PC-9 (cell line): ENCODE measurements at regions of chr3 and their contacts with region 1.

Region 1: DNA sequence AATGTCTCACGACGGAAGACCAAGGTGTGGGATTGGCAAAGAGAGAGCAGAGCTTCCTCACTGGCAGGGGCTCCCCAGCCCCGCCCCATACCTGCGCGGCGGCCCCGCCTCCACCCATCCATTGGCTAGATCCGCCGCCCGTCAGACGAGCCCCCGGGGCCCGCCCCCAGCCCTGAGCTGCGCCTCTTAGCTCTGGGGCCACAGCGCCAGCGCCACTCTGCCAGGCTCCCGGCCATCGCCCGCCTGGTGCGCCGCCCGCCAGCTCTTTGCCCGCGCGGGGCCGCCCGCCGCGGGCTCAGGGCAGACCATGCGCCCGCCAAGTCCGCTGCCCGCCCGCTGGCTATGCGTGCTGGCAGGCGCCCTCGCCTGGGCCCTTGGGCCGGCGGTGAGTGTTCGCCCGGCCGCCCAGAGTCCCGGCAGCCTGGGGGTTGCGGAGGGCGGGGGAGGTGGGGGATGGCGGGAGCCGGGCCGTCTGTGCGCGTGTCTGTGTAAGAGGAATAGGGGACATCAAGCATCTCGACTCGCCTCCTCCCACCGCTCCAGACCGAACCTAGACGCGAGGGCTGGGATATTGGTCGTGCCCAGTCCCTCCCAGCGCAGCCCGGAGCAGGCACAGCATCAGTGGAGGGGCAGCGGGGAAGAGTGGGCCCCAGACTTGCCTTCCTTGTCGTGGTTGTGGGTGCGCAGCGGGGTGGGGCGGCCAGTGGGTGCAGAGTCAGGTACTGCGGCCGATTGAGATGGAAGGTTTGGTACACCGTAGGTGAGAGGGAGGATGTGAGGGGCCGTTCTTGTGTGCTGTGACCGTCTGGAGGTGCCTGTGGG is at the start of gene VIPR1:
- DNase-seq: peak; percentile 77 to 96
- H3K4me3 ChIP-seq: peak within 1 kb of the TSS; percentile 64
- H3K27ac ChIP-seq: no peak within 1 kb of the TSS
- H3K4me1 ChIP-seq: peaks cover 38% of the 10 kb centered on the region
- H3K27me3 ChIP-seq: no peaks in the 10 kb centered on the region
- CTCF ChIP-seq: no peak
- total RNA-seq, gene VIPR1: 19.7 and 23.9 TPM in 2 replicates

Region 2: GRCh38 chr3:42314411-42314810 is 188.2 kb before region 1 on chr3:
- CTCF ChIA-PET with region 1: no interaction called
- POLR2A ChIA-PET with region 1: no interaction called
- intact Hi-C with region 1: no loop called
- DNase-seq: no peak
- H3K4me3 ChIP-seq: no peak overlapping the region
- H3K27ac ChIP-seq: no peak overlapping the region
- H3K4me1 ChIP-seq: no peaks in the 10 kb centered on the region
- H3K27me3 ChIP-seq: no peaks in the 10 kb centered on the region
- CTCF ChIP-seq: no peak

Region 3: GRCh38 chr3:42443819-42444436 is 58.7 kb before region 1 on chr3:
- CTCF ChIA-PET with region 1: no interaction called
- POLR2A ChIA-PET with region 1: no interaction called
- intact Hi-C with region 1: loop called (anchors 2 kb)
- DNase-seq: peak; percentile 59 to 83
- H3K4me3 ChIP-seq: no peak overlapping the region
- H3K27ac ChIP-seq: no peak overlapping the region
- H3K4me1 ChIP-seq: no peaks in the 10 kb centered on the region
- H3K27me3 ChIP-seq: no peaks in the 10 kb centered on the region
- CTCF ChIP-seq: peak; percentile 94

Region 4: DNA sequence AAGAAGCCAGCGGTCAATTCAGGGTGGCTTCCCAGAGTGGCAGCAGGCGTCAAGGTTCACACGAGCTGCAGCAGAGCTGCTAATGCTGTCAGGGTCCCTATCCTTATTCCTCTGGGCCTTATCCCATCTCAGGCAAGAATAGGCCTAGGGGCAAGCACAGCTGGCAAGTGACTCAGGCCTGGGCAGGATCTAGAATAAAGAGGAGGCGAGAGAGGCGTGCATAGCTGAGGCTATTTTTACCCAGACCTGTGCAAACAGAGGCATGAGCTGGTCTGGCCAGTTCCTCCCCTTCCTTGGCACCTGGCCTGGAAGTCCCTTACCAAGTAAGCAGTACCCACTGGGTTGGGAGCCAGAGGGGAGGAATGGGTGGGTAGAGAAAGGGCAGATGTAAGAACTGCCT is 12.4 kb before region 1 on chr3:
- CTCF ChIA-PET with region 1: interaction called, 6 read pairs
- POLR2A ChIA-PET with region 1: no interaction called
- intact Hi-C with region 1: loop called (anchors 1 kb)
- DNase-seq: peak; percentile 90 to 97
- H3K4me3 ChIP-seq: no peak overlapping the region
- H3K27ac ChIP-seq: peak overlapping the region; percentile 89
- H3K4me1 ChIP-seq: peaks cover 49% of the 10 kb centered on the region
- H3K27me3 ChIP-seq: no peaks in the 10 kb centered on the region
- CTCF ChIP-seq: no peak

Region 5: DNA sequence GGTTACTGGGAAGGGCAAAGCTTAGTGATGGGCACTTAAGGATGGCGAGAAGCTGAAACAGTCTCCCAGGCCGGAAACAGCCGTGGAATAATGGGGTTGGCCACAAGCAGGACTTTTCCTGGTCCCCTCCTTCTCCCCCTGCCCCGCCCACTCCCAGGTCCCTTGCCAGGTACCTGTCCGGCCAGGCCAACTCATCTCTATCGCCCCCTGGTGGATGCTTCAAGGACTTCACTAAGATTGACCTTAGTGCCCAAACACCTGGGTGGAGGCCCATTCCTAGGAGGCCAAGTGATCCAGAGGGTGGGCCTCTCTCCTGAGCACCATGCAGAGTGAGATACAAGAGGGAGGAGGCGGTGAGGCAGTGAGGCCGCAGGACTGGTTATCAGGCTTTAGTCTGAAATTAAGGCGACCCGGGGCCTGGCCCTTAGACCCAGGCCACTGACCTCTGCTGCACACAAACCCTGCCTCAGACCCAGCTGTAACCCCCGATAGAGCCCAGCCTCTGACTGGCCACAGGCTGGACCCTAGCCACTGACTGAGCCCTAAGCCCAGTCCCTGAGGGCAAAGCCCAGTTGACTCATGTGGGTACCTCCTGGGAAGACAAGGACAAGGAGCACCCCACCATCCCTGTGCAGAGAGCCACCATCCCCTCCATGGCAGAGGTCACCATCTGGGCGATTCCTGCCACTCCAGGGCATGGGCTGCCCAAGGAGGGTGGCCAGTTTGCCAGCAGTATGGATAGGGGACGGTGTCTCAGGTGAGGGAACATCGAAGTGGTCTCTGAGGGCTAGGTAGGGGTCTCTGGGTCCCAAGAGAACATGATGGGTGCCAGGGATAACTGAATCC is 37.5 kb after region 1 on chr3:
- CTCF ChIA-PET with region 1: interaction called, 16 read pairs
- POLR2A ChIA-PET with region 1: no interaction called
- intact Hi-C with region 1: loop called (anchors 1 kb)
- DNase-seq: peak; percentile 50 to 71
- H3K4me3 ChIP-seq: no peak overlapping the region
- H3K27ac ChIP-seq: no peak overlapping the region
- H3K4me1 ChIP-seq: 0 out of 2 replicates have a peak, but pooled peaks cover 9% of the 10 kb centered on the region
- H3K27me3 ChIP-seq: no peaks in the 10 kb centered on the region
- CTCF ChIP-seq: peak; percentile 82

Region 6: DNA sequence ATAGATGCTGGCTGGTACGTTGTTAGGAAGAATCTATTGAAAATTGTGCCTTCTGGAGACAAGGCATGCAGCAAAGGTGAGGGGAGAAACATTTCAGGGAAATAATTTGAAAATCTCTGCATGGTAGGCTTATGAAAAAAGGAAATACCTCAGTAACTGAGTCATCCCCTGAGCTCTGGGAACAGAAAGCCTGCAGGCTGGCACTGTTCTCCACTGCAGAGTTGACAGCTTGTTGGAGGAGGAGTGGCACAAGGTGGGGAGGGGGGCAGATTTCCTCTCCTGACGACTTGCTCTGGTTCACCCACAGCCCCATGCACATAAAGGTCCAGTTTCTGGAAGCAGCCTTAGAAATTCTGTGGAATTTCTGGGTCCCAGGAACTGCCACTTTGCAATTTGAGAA is 1367.5 kb after region 1 on chr3:
- CTCF ChIA-PET with region 1: interaction called, 11 read pairs
- POLR2A ChIA-PET with region 1: no interaction called
- intact Hi-C with region 1: no loop called
- DNase-seq: peak; percentile 64 to 89
- H3K4me3 ChIP-seq: peak overlapping the region; percentile 32; the same call in 1 of the 2 replicates
- H3K27ac ChIP-seq: peak overlapping the region; percentile 97
- H3K4me1 ChIP-seq: peaks cover 97% of the 10 kb centered on the region
- H3K27me3 ChIP-seq: no peaks in the 10 kb centered on the region
- CTCF ChIP-seq: no peak